ENCODE measurements at regions of chrX and their contacts with region 1.

Region 1: DNA sequence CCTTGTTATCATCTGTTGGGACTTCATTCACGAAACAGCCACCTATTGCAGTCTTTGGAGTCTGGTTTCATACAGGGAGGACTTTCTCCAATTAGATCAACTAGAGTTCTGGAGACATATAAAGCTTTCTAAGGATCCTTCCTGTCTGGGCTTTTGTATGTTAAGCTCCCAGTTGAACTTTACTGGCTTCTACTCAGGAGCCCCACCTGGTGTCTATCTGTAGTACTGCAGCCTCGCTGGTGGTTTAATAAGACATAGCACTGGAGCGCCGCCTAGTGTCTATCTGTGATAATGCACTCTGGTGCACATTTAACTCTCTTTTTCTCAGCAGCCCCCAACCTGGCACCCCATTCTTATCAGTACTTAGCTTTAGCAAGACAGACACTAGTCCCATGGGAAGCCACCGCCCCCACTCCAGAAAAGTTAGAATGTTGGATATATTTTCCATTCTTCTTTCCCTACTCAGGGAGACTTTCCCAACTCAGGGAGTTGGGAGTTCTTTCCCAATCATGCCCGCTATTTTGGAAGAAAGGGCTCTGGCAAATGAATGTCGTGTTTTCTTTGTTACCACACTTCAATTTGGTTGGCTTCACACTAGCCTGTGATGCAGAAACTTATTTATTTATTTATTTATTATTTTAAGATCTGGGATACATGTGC is 36.9 kb upstream of the SYTL4 start:
- DNase-seq: peak; percentile 84
- ATAC-seq: no peak

Region 2: DNA sequence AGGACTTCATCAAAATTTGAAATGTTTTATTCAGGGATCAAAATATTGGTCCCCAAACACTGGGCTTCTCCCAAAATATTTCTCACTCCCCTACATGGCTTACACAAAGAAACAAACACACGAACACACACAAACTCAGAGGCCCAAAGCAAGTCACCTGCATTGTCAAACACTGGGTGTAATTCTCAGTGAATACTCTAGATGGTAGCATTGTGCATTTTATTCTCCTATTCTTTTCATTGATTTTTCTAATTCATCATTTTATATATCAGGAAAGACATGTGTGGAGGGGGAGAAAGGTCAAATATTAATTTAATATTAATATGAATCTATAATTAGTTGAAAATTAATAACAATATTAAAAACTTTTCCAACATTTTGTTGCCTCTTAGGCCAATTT is 256.3 kb before region 1 on chrX:
- intact Hi-C with region 1: loop called (anchors 5 kb)
- DNase-seq: no peak
- ATAC-seq: no peak

Region 3: GRCh38 chrX:100685284-100685996 is 83.4 kb before region 1 on chrX:
- intact Hi-C with region 1: loop called (anchors 1 kb)
- DNase-seq: no peak
- ATAC-seq: peak; percentile 64